ENCODE measurements at regions of chr4 and their contacts with region 1.

Region 1: DNA sequence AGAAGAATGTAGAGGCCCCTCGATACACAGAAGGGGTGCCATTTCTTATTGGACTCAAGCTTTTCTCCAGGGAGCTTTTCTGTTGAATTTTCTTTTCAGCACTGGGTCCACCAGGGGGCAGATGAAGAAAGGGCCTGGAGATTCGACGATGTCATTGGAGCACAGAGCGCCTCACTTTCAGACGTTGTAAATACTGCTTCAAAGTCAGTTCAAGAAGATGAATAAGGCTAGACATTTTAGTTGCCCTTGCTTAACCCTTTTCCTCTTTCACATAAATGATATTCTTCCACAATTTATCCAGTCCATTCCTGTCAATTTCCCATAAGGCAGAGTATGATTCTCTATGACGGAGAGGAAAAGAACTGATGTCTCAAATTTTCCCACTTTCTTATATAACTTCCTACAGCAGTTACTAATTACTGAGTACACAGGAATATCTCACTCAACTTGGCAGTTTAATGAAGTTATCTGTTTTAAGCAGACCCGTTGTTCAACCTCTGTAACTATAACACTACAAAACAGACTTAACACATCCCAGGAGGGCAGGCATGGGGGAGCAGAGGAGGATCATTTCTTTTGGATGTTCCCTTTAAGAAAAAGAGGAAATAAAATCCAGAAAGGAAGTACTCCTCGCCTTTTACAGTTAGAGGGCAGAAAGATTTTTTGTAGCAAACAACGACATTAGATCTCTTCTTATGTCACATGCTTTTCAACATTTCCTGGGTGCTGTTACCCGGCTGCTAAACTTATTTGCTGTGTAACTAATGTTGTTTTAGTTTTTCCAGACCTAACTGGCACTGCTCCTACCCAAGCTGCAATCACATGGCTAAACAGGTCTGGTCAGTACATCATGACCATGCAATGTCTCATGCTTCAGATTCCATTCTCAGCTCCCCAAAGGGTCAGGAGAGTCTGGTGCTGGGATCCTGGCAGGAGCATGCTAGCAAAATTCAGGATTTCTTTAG is 12.2 kb upstream of the CENPU start:
- DNase-seq: no peak
- ATAC-seq: peak; percentile 89
- H3K4me3 ChIP-seq: no peak overlapping the region
- H3K27ac ChIP-seq: no peak overlapping the region
- H3K4me1 ChIP-seq: no peaks in the 10 kb centered on the region
- H3K27me3 ChIP-seq: no peaks in the 10 kb centered on the region
- CTCF ChIP-seq: peak; percentile 77 to 85 (median 82)
- EP300 ChIP-seq: no peak
- POLR2A ChIP-seq: no peak
- RAD21 ChIP-seq: peak; percentile 93

Region 2: GRCh38 chr4:184825896-184826690 is 80.0 kb after region 1 on chr4 and contains the start of gene ACSL1:
- CTCF ChIA-PET with region 1: interaction called, 11 read pairs
- POLR2A ChIA-PET with region 1: interaction called, 3 read pairs
- RAD21 ChIA-PET with region 1: interaction called, 5 read pairs
- SMC1A ChIA-PET with region 1: interaction called, 13 read pairs
- in situ Hi-C with region 1: no loop called
- intact Hi-C with region 1: no loop called
- DNase-seq: no peak
- ATAC-seq: peak; percentile 70
- H3K4me3 ChIP-seq: peak within 1 kb of the TSS; percentile 77
- H3K27ac ChIP-seq: peak within 1 kb of the TSS; percentile 90
- H3K4me1 ChIP-seq: peaks cover 22% of the 10 kb centered on the region
- H3K27me3 ChIP-seq: no peaks in the 10 kb centered on the region
- CTCF ChIP-seq: 0 out of 6 replicates have a peak, but pooled peaks of 1 of the 3 experiments have one; percentile 4
- EP300 ChIP-seq: no peak
- POLR2A ChIP-seq: peak; percentile 88
- RAD21 ChIP-seq: no peak
- polyA plus RNA-seq, gene ACSL1: 30.7 to 32.6 TPM

Region 3: GRCh38 chr4:184907216-184907615 is 161.1 kb after region 1 on chr4:
- CTCF ChIA-PET with region 1: interaction called, 25 read pairs
- POLR2A ChIA-PET with region 1: no interaction called
- RAD21 ChIA-PET with region 1: interaction called, 13 read pairs
- SMC1A ChIA-PET with region 1: interaction called, 12 read pairs
- in situ Hi-C with region 1: no loop called
- intact Hi-C with region 1: loop called (anchors 1 kb)
- DNase-seq: no peak
- ATAC-seq: peak; percentile 84
- H3K4me3 ChIP-seq: no peak overlapping the region
- H3K27ac ChIP-seq: no peak overlapping the region
- H3K4me1 ChIP-seq: no peaks in the 10 kb centered on the region
- H3K27me3 ChIP-seq: no peaks in the 10 kb centered on the region; a peak in 1 of 4 replicates
- CTCF ChIP-seq: peak; percentile 30 to 57 (median 34); a peak in 3 of 6 replicates
- EP300 ChIP-seq: no peak
- POLR2A ChIP-seq: no peak
- RAD21 ChIP-seq: peak; percentile 74

Region 4: GRCh38 chr4:185005216-185005819 is 259.2 kb after region 1 on chr4:
- CTCF ChIA-PET with region 1: interaction called, 14 read pairs
- POLR2A ChIA-PET with region 1: no interaction called
- RAD21 ChIA-PET with region 1: interaction called, 11 read pairs
- SMC1A ChIA-PET with region 1: interaction called, 11 read pairs
- in situ Hi-C with region 1: no loop called
- intact Hi-C with region 1: loop called (anchors 2 kb)
- DNase-seq: peak; percentile 8
- ATAC-seq: peak; percentile 99
- H3K4me3 ChIP-seq: no peak overlapping the region
- H3K27ac ChIP-seq: no peak overlapping the region
- H3K4me1 ChIP-seq: no peaks in the 10 kb centered on the region
- H3K27me3 ChIP-seq: peaks cover 3 to 5% of the 10 kb centered on the region in 2 experiments; a peak in 2 of 4 replicates
- CTCF ChIP-seq: peak; percentile 89 to 94 (median 94)
- EP300 ChIP-seq: no peak
- POLR2A ChIP-seq: no peak
- RAD21 ChIP-seq: peak; percentile 87

Region 5: GRCh38 chr4:185134307-185134869 is 388.3 kb after region 1 on chr4:
- CTCF ChIA-PET with region 1: interaction called, 9 read pairs
- POLR2A ChIA-PET with region 1: no interaction called
- RAD21 ChIA-PET with region 1: interaction called, 7 read pairs
- SMC1A ChIA-PET with region 1: interaction called, 4 read pairs
- in situ Hi-C with region 1: no loop called
- intact Hi-C with region 1: loop called (anchors 10 kb)
- DNase-seq: no peak
- ATAC-seq: peak; percentile 91
- H3K4me3 ChIP-seq: no peak overlapping the region
- H3K27ac ChIP-seq: no peak overlapping the region
- H3K4me1 ChIP-seq: no peaks in the 10 kb centered on the region
- H3K27me3 ChIP-seq: no peaks in the 10 kb centered on the region; a peak in 1 of 4 replicates
- CTCF ChIP-seq: peak; percentile 69 to 83 (median 81)
- EP300 ChIP-seq: no peak
- POLR2A ChIP-seq: no peak
- RAD21 ChIP-seq: peak; percentile 79

Region 6: DNA sequence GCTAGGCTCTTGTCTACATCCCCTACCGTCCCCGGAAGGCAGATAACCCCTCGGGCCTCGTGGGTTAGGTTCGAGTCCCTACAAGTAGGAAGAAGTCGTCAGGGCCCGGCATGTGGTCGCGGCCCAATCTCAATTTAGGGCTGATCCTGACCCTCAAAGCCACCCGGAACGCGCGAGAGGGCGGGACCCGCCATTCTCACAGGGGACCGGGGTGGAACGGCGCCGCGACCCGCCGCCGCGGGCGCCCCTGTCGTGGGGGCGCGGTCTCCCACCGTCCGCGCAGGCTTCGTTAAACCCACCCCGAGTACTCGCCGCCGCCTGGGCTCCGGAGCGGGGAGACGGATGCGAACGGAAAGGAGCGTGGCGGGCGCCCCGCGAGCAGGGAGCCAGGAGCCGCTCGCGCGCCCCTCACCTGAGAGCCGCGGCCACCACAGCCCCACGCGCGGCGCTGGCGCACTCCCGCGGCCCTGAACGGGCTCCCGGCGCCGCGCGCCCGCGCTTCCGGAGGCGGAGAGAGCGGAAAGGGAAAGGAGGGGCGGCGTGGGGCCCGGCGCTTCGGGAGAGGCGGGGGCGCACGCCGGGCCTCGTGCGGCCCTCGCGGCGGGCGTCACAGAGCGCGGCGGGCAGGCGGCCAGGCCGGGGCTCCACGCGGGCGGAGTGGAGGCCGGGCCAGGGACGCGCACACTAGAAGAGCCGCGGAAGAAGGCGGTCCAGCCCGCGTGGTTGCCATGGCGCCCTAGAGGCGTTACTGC is 457.5 kb after region 1 on chr4 and contains the start of gene CFAP97:
- CTCF ChIA-PET with region 1: no interaction called
- POLR2A ChIA-PET with region 1: no interaction called
- RAD21 ChIA-PET with region 1: no interaction called
- SMC1A ChIA-PET with region 1: no interaction called
- in situ Hi-C with region 1: no loop called
- intact Hi-C with region 1: no loop called
- DNase-seq: no peak
- ATAC-seq: peak; percentile 87
- H3K4me3 ChIP-seq: peak within 1 kb of the TSS; percentile 61
- H3K27ac ChIP-seq: peak within 1 kb of the TSS; percentile 86
- H3K4me1 ChIP-seq: peaks cover 26% of the 10 kb centered on the region
- H3K27me3 ChIP-seq: no peaks in the 10 kb centered on the region
- CTCF ChIP-seq: no peak
- EP300 ChIP-seq: no peak
- POLR2A ChIP-seq: peak; percentile 90
- RAD21 ChIP-seq: no peak
- polyA plus RNA-seq, gene CFAP97: 27.2 to 47.5 TPM